ENCODE measurements at regions of chr11 and their contacts with region 1.

Region 1: GRCh38 chr11:116853461-116854073 is 16.1 kb upstream of the APOA1 start:
- DNase-seq: peak; percentile 80
- H3K4me3 Mint-ChIP-seq: peak overlapping the region; percentile 7
- H3K27ac Mint-ChIP-seq: peak overlapping the region; percentile 88
- H3K4me1 Mint-ChIP-seq: peaks cover 59% of the 10 kb centered on the region
- H3K27me3 Mint-ChIP-seq: no peaks in the 10 kb centered on the region

Region 2: GRCh38 chr11:116787786-116788486 is 65.6 kb before region 1 on chr11 and contains the start of gene ZPR1:
- CTCF ChIA-PET with region 1: interaction called, 5 read pairs
- intact Hi-C with region 1: loop called (anchors 1 kb)
- DNase-seq: peak; percentile 87
- H3K4me3 Mint-ChIP-seq: peak within 1 kb of the TSS; percentile 92
- H3K27ac Mint-ChIP-seq: peak within 1 kb of the TSS; percentile 87
- H3K4me1 Mint-ChIP-seq: peaks cover 51% of the 10 kb centered on the region
- H3K27me3 Mint-ChIP-seq: no peaks in the 10 kb centered on the region
- total RNA-seq, gene ZPR1: 87.2 to 87.8 TPM

Region 3: GRCh38 chr11:116890193-116890592 is 36.6 kb after region 1 on chr11:
- CTCF ChIA-PET with region 1: no interaction called
- intact Hi-C with region 1: loop called (anchors 1 kb)
- DNase-seq: peak; percentile 57
- H3K4me3 Mint-ChIP-seq: no peak overlapping the region
- H3K27ac Mint-ChIP-seq: peak overlapping the region; percentile 9
- H3K4me1 Mint-ChIP-seq: peaks cover 12% of the 10 kb centered on the region
- H3K27me3 Mint-ChIP-seq: no peaks in the 10 kb centered on the region

Region 4: DNA sequence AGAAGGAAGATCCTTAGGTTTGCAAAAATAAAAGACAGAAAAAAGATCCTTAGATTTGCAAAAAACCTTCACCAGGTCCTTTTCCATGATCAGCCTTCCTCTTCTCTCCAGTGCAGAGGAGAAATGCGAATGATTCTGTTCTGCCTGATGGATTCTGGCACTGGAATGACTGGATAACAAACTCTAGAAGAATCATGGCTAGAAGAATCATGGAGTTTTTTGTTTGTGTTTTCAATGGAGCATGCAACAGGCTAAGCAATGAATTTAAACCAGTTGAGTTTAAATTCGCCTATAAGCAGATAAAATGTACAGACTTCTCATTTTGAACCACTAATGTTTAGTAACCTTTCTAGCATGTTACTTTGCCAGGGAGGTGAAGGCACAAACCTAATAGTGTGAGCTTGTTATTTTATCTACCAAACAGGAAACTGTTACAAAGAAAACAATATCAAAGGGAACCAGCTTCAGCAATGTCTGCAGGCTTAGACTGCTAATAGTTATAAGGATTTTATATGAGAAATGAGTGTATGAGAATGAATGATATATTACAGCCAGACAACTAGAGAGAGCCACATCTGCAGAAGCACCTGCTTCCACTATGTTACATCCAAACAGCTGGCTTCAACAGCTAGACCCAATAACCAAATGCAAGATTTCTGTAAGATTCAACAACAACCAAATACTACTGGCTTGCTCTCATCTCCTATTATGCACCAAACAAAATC is 48.6 kb after region 1 on chr11:
- CTCF ChIA-PET with region 1: no interaction called
- intact Hi-C with region 1: no loop called
- DNase-seq: no peak
- H3K4me3 Mint-ChIP-seq: no peak overlapping the region
- H3K27ac Mint-ChIP-seq: no peak overlapping the region
- H3K4me1 Mint-ChIP-seq: peaks cover 24% of the 10 kb centered on the region
- H3K27me3 Mint-ChIP-seq: no peaks in the 10 kb centered on the region

Region 5: DNA sequence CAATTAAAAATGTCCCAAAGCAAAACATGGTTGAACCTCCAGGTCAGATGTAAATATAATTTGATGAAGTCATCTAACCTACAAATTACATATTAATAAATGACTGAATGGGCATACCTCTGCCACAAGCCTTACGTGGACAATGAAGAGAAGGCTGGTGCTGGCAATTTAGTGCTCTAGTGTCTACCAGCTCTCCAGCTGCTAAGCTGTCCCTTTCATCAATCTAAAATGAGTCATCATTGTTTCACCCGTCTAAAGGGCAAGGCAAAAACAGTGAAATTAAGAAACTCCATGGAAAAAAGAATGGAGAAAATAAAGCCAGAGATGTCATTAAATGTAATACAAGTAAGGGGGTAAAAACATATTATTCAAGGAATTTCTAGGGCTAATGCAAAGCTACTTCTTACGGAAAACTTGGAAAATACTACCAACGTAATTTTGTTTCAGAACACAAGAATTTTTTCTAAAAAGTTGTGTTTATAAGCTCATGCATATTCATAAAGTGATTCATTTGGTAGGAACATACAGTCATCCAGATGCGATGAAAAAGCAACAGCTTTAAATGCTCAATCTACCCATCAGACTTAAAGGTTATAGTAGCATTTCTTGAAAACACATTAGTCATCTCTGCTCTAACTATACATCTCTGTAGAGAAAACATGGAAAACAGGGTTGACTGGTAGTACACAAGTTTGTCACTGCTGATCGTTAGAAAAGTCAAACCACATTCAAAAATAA is 173.2 kb after region 1 on chr11:
- CTCF ChIA-PET with region 1: no interaction called
- intact Hi-C with region 1: loop called (anchors 1 kb)
- DNase-seq: peak; percentile 16
- H3K4me3 Mint-ChIP-seq: peak overlapping the region; percentile 14
- H3K27ac Mint-ChIP-seq: peak overlapping the region; percentile 84
- H3K4me1 Mint-ChIP-seq: peaks cover 68% of the 10 kb centered on the region
- H3K27me3 Mint-ChIP-seq: no peaks in the 10 kb centered on the region

Region 6: GRCh38 chr11:117092951-117093590 is 239.5 kb after region 1 on chr11:
- CTCF ChIA-PET with region 1: no interaction called
- intact Hi-C with region 1: loop called (anchors 1 kb)
- DNase-seq: no peak
- H3K4me3 Mint-ChIP-seq: no peak overlapping the region
- H3K27ac Mint-ChIP-seq: peak overlapping the region; percentile 60
- H3K4me1 Mint-ChIP-seq: peaks cover 76% of the 10 kb centered on the region
- H3K27me3 Mint-ChIP-seq: no peaks in the 10 kb centered on the region

Region 7: DNA sequence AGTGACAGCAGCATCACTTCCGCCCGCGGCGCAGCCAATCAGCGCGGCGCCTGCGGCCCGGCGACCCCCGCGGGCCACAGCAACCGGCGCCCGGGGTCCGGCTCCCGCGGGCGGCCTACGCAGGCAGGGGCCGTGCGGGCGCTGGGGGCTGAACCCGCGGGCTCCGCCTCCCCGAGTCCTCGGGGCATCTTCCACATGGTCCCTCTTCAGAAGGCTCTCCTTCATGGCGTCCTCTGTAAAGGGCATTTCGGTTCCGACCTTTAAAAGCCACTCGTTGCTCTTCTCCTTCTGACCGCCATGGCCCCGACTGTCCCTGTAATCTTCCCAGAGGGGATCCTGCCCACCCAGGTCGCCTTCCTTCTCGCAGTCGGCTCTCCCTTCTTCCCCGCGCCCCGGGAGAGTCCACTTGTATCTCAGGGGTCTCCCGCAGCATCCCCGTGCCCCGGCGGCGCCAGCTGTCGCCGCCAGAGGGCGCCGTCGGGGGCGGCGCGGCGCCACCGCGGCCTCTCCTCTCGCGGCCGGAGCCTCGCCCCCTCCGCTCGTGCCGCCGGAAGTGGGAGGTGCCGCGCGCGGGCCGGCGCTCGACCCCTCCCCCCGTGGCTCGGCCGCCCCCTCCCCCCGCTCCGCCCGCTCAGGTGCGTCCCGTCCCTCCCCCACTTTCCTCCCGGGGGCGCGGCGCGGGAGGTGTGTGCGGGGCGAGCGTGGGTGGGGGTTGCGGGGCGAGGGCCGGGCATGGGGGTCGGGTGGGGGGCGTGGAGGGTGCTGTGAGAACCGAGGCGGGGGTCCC is 378.7 kb after region 1 on chr11 and contains the start of gene RNF214:
- CTCF ChIA-PET with region 1: interaction called, 3 read pairs
- intact Hi-C with region 1: loop called (anchors 1 kb)
- DNase-seq: peak; percentile 74
- H3K4me3 Mint-ChIP-seq: peak within 1 kb of the TSS; percentile 99
- H3K27ac Mint-ChIP-seq: peak within 1 kb of the TSS; percentile 99
- H3K4me1 Mint-ChIP-seq: peaks cover 34% of the 10 kb centered on the region
- H3K27me3 Mint-ChIP-seq: no peaks in the 10 kb centered on the region
- total RNA-seq, gene RNF214: 14.0 to 14.4 TPM

Region 8: GRCh38 chr11:117985953-117986887 is 1132.7 kb after region 1 on chr11 and contains the start of gene IL10RA:
- CTCF ChIA-PET with region 1: no interaction called
- intact Hi-C with region 1: loop called (anchors 5 kb)
- DNase-seq: peak; percentile 81
- H3K4me3 Mint-ChIP-seq: peak within 1 kb of the TSS; percentile 84
- H3K27ac Mint-ChIP-seq: peak within 1 kb of the TSS; percentile 88
- H3K4me1 Mint-ChIP-seq: peaks cover 63% of the 10 kb centered on the region
- H3K27me3 Mint-ChIP-seq: no peaks in the 10 kb centered on the region
- total RNA-seq, gene IL10RA: 11.3 to 16.1 TPM